ENCODE measurements at regions of chr15 and their contacts with region 1.

Region 1: DNA sequence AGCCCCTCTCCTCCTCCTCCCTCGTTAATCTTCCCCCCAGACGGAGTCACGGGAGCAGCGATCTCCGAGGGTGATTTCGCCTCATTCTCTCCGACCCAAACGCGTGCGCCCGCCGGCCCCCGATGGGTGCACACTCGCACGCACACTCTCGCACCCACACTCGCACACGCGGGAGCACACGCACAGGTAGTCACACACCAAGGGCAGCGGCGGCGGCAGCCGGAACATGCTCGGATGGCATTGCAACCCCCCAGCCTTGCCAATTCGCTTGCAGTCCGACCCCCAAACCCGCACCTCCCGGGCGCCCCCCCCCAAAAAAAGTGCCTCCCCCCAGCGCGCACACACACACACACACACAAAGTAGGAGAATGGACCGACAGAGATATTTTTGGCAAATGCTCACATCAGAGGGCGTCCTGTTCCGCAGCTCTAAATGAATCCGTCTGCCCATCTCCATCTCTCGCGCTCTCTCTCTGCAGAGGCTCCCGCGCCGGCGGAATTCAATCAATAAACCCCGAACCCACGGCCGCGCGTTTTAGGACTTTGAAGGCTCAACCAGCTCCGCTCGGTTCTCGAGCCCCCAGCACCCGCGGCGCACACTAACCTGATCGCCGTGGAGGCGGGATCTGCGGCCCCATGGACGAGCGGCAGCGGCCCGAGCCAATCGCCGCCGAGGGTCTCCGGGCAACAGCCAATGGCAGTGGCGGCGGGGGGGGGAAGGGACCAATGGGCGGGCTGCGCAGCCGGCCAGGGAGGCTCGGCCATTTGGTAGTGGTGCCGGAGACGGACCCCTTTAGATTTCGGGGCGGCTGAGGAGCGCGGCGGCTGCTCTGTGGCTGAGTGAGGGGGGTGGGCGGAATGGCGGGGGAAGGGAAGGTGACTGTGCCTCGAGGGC is at the start of gene ANP32A:
- DNase-seq: peak; percentile 90 to 98 (median 96)
- ATAC-seq: peak; percentile 65
- H3K4me3 Mint-ChIP-seq: peak within 1 kb of the TSS; percentile 90 to 100 (median 97)
- H3K27ac Mint-ChIP-seq: peak within 1 kb of the TSS; percentile 92 to 100 (median 96)
- H3K4me1 Mint-ChIP-seq: peaks cover 20 to 36% (median 33%) of the 10 kb centered on the region in 4 donors
- H3K27me3 Mint-ChIP-seq: no peaks in the 10 kb centered on the region
- polyA plus RNA-seq, gene ANP32A: 81.3 to 88.1 (median 84.3) TPM

Region 2: GRCh38 chr15:68795298-68795848 is 25.2 kb before region 1 on chr15:
- POLR2A ChIA-PET with region 1: interaction called, 53 read pairs
- DNase-seq: peak; percentile 41 to 76 (median 53)
- ATAC-seq: peak; percentile 55
- H3K4me3 Mint-ChIP-seq: peak overlapping the region; percentile 45 to 72 (median 64)
- H3K27ac Mint-ChIP-seq: peak overlapping the region; percentile 18 to 93 (median 84)
- H3K4me1 Mint-ChIP-seq: peaks cover 70 to 100% (median 98%) of the 10 kb centered on the region in 4 donors
- H3K27me3 Mint-ChIP-seq: no peaks in the 10 kb centered on the region